ENCODE measurements at regions of chr22 and their contacts with region 1.

Region 1: DNA sequence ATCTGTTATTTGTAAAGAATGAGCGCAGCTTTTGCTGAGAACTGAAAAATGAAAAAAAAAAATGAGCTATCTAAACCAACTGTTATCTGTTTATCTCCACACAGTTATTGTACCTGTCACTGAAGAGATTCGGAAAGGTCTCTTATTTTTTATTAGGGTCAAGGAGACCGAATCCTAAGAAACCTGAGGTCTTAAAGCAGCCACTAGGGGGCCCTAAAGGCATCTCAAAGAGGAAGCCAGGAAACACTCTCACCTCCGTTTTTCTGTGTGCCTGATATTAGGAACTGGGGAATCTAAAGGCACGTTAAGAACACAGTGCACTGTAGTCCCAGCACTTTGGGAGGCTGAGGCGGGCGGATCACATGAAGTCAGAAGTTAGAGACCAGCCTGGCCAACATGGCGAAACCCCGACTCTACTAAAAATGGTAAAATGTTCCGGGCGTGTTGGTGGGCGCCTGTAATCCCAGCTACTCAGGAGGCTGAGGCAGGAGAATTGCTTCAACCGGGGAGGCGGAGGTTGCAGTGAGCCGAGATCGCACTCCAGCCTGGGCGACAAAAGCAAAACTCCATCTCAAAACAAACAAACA is 3.5 kb upstream of the LARGE1 start:
- DNase-seq: peak; percentile 23
- H3K4me3 ChIP-seq: no peak overlapping the region
- H3K27ac ChIP-seq: no peak overlapping the region
- H3K27me3 ChIP-seq: peaks cover 6% of the 10 kb centered on the region
- CTCF ChIP-seq: peak; percentile 86

Region 2: DNA sequence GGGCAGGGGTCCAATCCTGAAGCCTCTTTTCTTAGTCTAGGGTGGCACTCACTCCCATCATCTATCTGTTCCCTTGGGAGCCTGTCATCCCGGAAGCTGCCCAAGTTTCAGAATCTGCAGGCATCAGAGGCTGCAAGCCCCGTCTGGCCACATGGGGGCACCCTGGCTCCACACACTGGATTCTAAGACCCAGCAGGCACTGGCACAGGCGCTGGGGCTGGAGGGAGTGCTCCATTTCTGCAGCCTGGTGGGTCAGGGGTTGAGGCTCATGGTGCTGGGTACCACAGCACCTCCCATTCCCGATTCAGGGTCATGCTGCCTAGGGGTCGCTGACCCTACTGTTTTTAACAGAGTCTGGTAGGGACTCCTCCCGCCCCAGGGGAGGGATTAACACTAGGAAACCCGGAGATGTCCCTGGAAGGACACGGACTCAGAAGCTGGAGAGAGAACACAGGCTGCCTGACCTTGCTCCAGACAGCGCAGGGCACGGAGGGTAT is 621.7 kb before region 1 on chr22:
- CTCF ChIA-PET with region 1: interaction called, 19 read pairs
- POLR2A ChIA-PET with region 1: interaction called, 5 read pairs
- DNase-seq: peak; percentile 39
- H3K4me3 ChIP-seq: no peak overlapping the region
- H3K27ac ChIP-seq: no peak overlapping the region
- H3K27me3 ChIP-seq: no peaks in the 10 kb centered on the region
- CTCF ChIP-seq: peak; percentile 99

Region 3: GRCh38 chr22:33841281-33842005 is 82.3 kb before region 1 on chr22:
- CTCF ChIA-PET with region 1: no interaction called
- POLR2A ChIA-PET with region 1: no interaction called
- DNase-seq: no peak
- H3K4me3 ChIP-seq: no peak overlapping the region
- H3K27ac ChIP-seq: no peak overlapping the region
- H3K27me3 ChIP-seq: no peaks in the 10 kb centered on the region
- CTCF ChIP-seq: no peak

Region 4: DNA sequence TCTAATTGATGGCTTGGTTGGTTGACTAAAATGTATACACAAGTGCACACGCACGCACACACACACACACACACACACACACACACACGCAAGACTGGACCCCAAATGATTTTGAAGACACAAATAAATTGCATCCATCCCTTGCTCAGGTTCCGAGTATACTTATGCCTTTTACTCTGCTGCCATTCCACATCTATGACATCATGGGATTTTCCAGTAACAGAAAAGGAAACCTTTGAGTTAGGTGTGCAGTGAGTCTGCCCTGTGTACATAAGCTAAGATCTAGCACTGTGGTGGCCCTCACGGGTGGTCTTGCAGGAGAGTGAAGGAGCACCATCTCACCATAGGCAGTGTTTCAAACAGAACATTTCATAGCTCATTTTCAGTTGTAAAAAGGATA is 17.0 kb after region 1 on chr22:
- CTCF ChIA-PET with region 1: interaction called, 22 read pairs
- POLR2A ChIA-PET with region 1: no interaction called
- DNase-seq: no peak
- H3K4me3 ChIP-seq: no peak overlapping the region
- H3K27ac ChIP-seq: no peak overlapping the region
- H3K27me3 ChIP-seq: no peaks in the 10 kb centered on the region
- CTCF ChIP-seq: no peak

Region 5: GRCh38 chr22:34111210-34111824 is 187.6 kb after region 1 on chr22:
- CTCF ChIA-PET with region 1: interaction called, 14 read pairs
- POLR2A ChIA-PET with region 1: no interaction called
- DNase-seq: no peak
- H3K4me3 ChIP-seq: no peak overlapping the region
- H3K27ac ChIP-seq: no peak overlapping the region
- H3K27me3 ChIP-seq: no peaks in the 10 kb centered on the region
- CTCF ChIP-seq: peak; percentile 52

Region 6: DNA sequence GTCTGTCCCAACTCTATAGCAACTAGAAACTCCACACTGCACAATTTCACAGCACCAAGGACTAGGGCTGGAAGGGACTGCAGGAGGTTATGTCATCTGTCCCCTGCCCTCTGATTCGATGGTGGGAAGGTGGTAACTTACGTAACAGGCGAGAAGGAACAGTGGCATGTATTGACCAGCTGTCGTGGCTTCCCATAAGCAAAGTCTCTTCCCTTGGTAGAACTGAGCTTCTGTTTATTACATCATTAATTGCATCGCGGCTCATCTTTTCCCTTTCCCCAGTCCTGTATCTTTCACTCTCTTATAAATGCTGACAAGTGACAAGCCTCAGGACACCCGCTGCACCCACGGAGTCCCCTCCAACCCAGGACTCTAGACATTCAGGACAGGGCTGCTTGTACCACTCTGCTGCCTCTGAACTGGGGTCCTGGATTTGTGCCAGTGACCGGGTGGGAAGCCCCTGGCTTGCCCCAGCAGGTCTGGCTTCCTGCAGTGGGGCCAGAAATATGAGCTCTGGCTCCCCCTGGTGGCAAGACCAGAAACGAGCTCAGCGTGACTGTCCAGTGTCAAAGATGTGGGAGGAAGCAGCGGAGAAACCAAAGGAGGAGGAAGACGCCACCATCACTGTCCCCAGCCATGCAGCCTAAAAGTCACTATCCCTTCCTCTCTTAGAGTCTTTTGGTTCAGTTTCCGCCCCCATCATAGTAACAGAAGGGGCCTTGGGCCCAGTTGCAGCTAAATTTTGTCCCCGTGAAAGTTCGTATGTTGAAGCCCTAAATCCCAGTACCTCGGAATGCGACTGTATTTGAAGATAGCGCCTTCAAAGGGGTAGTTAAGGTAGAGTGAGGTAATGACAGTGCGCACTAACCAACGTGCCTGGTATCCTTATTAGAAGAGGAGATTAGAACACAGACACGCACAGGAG is 1226.7 kb after region 1 on chr22:
- CTCF ChIA-PET with region 1: interaction called, 31 read pairs
- POLR2A ChIA-PET with region 1: no interaction called
- DNase-seq: no peak
- H3K4me3 ChIP-seq: no peak overlapping the region
- H3K27ac ChIP-seq: no peak overlapping the region
- H3K27me3 ChIP-seq: no peaks in the 10 kb centered on the region
- CTCF ChIP-seq: peak; percentile 76